ENCODE measurements at regions of chr2 and their contacts with region 1.

Region 1: DNA sequence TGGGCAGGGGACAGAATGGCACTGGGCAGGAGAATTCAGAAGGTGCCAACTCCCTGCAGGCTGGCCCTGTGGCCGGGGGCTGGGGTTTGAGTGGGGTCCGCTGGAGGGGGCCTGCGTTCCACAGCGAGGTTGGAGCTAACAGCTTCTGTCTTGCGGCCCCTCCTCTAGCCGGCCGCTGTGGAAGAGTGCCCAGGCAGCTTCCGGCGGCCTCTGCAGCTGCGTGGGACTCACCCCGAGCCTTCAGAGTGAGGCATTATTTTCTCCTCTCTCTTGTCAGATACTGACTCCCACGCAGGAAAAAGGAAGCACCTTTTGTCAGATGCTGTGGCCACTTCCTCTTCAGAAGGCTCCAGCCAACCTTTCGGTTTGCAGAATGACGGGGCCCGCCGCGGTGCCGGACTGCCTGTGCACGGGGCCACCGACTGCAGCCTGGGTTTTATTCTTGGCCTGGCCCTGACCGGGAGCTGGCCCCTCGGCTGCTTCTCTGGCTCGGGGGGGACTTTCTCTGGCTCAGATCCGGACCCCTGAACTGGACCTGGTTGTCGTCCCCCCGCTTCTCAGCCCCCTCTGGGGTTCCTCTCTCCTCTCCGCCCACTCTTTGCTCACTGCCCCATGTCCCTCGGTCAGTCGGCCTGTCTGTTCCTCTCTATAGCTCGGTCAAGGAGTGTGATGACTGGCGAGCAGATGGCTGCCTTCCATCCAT is 40.1 kb downstream of the ARHGAP25 start:
- DNase-seq: peak; percentile 71
- ATAC-seq: peak; percentile 78
- H3K4me3 Mint-ChIP-seq: peak overlapping the region; percentile 98
- H3K27ac Mint-ChIP-seq: peak overlapping the region; percentile 96
- H3K4me1 Mint-ChIP-seq: peaks cover 82% of the 10 kb centered on the region
- H3K27me3 Mint-ChIP-seq: no peaks in the 10 kb centered on the region
- CTCF ChIP-seq: no peak

Region 2: GRCh38 chr2:68721482-68722101 is 53.1 kb before region 1 on chr2:
- CTCF ChIA-PET with region 1: interaction called, 3 read pairs
- POLR2A ChIA-PET with region 1: interaction called, 15 read pairs
- intact Hi-C with region 1: loop called (anchors 2 kb)
- DNase-seq: no peak
- ATAC-seq: peak; percentile 82
- H3K4me3 Mint-ChIP-seq: peak overlapping the region; percentile 38
- H3K27ac Mint-ChIP-seq: peak overlapping the region; percentile 76
- H3K4me1 Mint-ChIP-seq: peaks cover 77% of the 10 kb centered on the region
- H3K27me3 Mint-ChIP-seq: no peaks in the 10 kb centered on the region
- CTCF ChIP-seq: no peak

Region 3: DNA sequence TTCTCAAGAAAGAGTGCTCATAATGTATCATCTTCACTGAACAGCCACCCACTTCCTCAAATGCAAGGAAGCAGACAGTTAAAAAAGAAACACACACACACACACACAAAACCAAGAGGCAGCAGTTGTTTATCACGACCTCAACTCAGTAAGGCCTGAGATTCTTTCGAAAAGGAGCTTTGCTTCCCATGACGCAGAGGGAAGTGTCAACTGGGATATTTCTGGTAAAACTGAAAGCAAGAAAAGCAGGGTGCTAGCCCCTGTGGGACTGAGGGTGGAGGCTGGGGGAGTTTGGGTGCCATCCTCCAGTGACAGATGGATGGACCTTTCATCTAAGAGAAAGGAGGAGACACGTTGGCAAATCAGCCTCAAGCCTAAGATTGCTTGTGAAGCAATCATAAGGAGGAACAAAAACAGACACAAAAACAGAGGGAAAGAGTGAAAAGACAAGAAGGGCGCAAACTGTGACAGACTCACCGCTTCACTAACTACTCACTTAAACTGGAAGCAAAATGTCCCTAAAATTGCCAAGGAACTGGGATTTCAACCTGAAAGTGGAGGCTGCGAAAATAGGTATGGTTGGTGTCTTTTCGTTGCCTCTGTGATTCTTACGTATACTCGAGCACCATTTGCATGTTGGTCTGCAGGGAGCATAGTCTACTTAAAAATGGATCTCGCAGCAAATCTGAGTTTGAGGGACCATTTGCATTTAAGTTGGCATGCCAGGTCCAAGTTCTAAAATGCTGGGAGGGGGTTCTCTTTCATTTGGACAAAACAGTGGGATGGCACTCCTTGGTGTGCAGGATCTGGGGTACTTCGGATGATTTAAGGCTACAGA is 39.8 kb before region 1 on chr2 and contains the start of gene ARHGAP25:
- CTCF ChIA-PET with region 1: interaction called, 12 read pairs
- POLR2A ChIA-PET with region 1: interaction called, 60 read pairs
- intact Hi-C with region 1: loop called (anchors 1 kb)
- DNase-seq: peak; percentile 45
- ATAC-seq: peak; percentile 74
- H3K4me3 Mint-ChIP-seq: no peak within 1 kb of the TSS
- H3K27ac Mint-ChIP-seq: no peak within 1 kb of the TSS
- H3K4me1 Mint-ChIP-seq: peaks cover 37% of the 10 kb centered on the region
- H3K27me3 Mint-ChIP-seq: no peaks in the 10 kb centered on the region
- CTCF ChIP-seq: no peak
- total RNA-seq, gene ARHGAP25: 324 and 336 TPM in 2 replicates

Region 4: DNA sequence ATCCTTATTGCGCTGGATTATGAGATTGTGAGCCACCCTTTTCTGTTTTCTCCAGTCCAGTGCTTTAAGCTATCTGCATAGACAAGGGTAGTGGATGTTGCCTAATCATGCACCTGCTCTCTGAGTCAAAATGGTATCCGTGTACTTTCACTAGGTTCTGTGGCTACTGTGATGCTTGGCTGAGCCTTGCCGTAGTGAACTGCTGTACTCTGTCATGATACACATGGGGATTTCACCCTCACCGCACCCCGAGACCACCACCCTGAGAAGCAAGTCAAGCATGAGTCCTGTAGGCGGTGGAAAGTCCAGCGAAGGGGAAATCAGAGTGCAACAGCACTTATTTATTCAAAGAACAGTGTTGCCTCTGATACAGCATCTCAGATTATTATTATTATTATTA is 14.9 kb after region 1 on chr2:
- CTCF ChIA-PET with region 1: interaction called, 43 read pairs
- POLR2A ChIA-PET with region 1: interaction called, 1,418 read pairs
- intact Hi-C with region 1: loop called (anchors 1 kb)
- DNase-seq: peak; percentile 75
- ATAC-seq: peak; percentile 87
- H3K4me3 Mint-ChIP-seq: peak overlapping the region; percentile 61
- H3K27ac Mint-ChIP-seq: no peak overlapping the region
- H3K4me1 Mint-ChIP-seq: peaks cover 47% of the 10 kb centered on the region
- H3K27me3 Mint-ChIP-seq: no peaks in the 10 kb centered on the region
- CTCF ChIP-seq: no peak

Region 5: DNA sequence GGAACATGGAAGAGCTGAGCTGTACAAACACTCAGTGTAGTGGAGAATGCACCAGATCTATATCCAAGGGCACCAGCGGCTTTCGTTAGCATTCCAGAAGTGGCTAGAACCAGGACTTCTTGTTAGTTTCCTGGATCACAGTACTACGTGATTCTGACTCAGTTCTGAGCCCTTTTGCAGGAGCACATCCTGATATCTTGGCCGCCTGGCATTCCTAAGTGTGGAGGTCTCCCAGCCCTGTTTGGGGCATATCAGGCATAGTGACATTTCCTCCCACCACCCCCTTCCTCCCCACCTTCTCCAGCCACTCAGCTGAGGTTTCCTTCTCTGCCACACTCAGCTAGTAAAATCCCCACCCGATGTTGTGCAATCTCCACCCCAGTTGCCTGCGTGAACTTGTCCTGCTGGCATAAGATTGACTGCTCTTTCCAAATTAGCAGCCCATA is 33.1 kb after region 1 on chr2:
- CTCF ChIA-PET with region 1: interaction called, 6 read pairs
- POLR2A ChIA-PET with region 1: interaction called, 58 read pairs
- intact Hi-C with region 1: no loop called
- DNase-seq: no peak
- ATAC-seq: no peak
- H3K4me3 Mint-ChIP-seq: no peak overlapping the region
- H3K27ac Mint-ChIP-seq: peak overlapping the region; percentile 87
- H3K4me1 Mint-ChIP-seq: peaks cover 64% of the 10 kb centered on the region
- H3K27me3 Mint-ChIP-seq: no peaks in the 10 kb centered on the region
- CTCF ChIP-seq: no peak

Region 6: DNA sequence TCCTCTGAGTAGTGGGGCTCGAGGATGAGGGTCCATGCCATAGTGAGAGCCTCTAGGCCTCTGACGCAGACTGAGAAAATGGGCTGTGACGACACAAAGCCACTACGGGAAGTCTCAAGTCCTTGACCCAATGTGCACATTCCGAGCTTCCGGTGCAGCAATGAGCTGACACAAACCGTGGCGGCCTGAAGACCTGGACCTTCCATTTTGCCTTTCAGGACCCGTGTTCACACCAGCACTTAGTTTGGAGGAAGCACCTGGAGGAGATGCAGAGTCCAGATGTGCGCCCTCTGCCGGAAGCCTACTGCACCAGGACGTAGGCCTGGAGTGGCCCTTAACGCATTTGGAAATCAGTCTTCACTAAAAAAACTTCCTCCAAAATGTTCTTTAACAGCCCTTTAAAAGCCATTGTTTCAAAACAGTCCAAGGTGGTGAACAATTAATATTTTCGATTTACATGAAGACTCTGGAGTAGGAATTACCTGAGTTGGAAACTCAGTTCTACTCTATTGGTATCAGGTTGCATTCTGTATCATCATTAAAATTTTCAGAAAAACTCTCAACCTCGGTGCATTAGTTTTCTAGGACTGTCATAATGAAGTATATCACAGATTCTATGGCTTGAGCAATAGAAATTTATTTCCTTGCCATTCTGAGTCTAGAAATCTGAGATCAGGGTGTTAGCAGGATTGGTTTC is 62.6 kb after region 1 on chr2:
- CTCF ChIA-PET with region 1: interaction called, 13 read pairs
- POLR2A ChIA-PET with region 1: interaction called, 91 read pairs
- intact Hi-C with region 1: loop called (anchors 2 kb)
- DNase-seq: peak; percentile 53
- ATAC-seq: peak; percentile 33
- H3K4me3 Mint-ChIP-seq: no peak overlapping the region
- H3K27ac Mint-ChIP-seq: peak overlapping the region; percentile 74
- H3K4me1 Mint-ChIP-seq: peaks cover 57% of the 10 kb centered on the region
- H3K27me3 Mint-ChIP-seq: no peaks in the 10 kb centered on the region
- CTCF ChIP-seq: no peak

Region 7: GRCh38 chr2:68878753-68879152 is 104.0 kb after region 1 on chr2:
- CTCF ChIA-PET with region 1: no interaction called
- POLR2A ChIA-PET with region 1: no interaction called
- intact Hi-C with region 1: no loop called
- DNase-seq: no peak
- ATAC-seq: no peak
- H3K4me3 Mint-ChIP-seq: no peak overlapping the region
- H3K27ac Mint-ChIP-seq: no peak overlapping the region
- H3K4me1 Mint-ChIP-seq: no peaks in the 10 kb centered on the region
- H3K27me3 Mint-ChIP-seq: peaks cover 17% of the 10 kb centered on the region
- CTCF ChIP-seq: no peak

Measured in activated B cell treated with CpG ODN at 0.5 μM for 24 hours (primary cell).